ENCODE measurements at regions of chr11 and their contacts with region 1.

Region 1: GRCh38 chr11:76248210-76248609 is 41.9 kb upstream of the WNT11 start:
- DNase-seq: peak; percentile 52
- ATAC-seq: peak; percentile 55
- H3K4me3 Mint-ChIP-seq: no peak overlapping the region
- H3K27ac Mint-ChIP-seq: no peak overlapping the region
- H3K4me1 Mint-ChIP-seq: peaks cover 14% of the 10 kb centered on the region
- H3K27me3 Mint-ChIP-seq: peaks cover 18% of the 10 kb centered on the region
- CTCF ChIP-seq: peak; percentile 25; the same call in 1 of the 2 replicates

Region 2: DNA sequence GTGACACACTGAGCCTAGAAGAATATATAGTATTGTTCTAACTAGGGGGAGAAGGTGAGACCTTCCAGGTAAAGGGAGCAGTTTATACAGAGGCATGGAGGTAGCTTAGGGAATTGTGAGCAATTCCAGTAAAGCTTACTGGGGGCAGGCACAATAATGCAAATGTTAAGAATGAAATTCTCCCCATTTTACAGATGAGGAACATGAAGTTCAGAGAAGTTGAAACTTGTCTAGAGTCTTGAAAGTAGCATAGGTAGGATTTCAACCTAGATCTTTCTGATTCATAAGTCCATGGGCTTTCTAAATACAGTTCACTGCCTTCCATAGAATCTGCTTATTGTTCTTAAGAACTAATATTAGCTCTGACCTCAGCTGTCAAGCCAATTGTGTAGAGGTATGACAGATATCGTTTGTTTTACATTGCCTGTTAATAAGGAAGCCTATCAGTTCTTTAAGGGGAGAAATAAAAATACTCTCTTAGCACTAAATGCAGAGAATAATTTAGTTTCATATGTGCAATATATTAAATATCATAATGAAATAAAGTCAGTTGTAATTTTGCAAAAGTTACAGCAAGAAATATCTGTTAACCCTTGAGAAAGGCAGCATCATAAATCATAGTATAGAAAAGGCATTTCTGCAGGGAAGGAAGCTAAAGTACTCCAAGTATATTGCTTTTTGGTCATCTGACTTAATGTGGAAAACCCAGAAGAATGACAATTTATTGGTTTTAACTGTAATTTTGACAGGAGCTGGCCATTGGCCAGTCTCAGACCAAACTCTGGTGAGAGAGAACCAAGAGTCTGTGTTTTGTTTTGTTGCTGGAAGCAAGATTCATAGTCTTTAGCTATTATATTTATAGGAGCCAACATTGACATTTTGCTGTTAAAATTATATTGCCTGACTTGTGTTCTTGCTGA is 251.4 kb before region 1 on chr11:
- CTCF ChIA-PET with region 1: no interaction called
- POLR2A ChIA-PET with region 1: no interaction called
- DNase-seq: no peak
- ATAC-seq: no peak
- H3K4me3 Mint-ChIP-seq: no peak overlapping the region
- H3K27ac Mint-ChIP-seq: no peak overlapping the region
- H3K4me1 Mint-ChIP-seq: no peaks in the 10 kb centered on the region
- H3K27me3 Mint-ChIP-seq: no peaks in the 10 kb centered on the region
- CTCF ChIP-seq: no peak

Region 3: GRCh38 chr11:76083563-76084451 is 164.4 kb before region 1 on chr11:
- CTCF ChIA-PET with region 1: no interaction called
- POLR2A ChIA-PET with region 1: no interaction called
- DNase-seq: no peak
- ATAC-seq: no peak
- H3K4me3 Mint-ChIP-seq: no peak overlapping the region
- H3K27ac Mint-ChIP-seq: no peak overlapping the region
- H3K4me1 Mint-ChIP-seq: peaks cover 23% of the 10 kb centered on the region
- H3K27me3 Mint-ChIP-seq: no peaks in the 10 kb centered on the region
- CTCF ChIP-seq: no peak

Region 4: DNA sequence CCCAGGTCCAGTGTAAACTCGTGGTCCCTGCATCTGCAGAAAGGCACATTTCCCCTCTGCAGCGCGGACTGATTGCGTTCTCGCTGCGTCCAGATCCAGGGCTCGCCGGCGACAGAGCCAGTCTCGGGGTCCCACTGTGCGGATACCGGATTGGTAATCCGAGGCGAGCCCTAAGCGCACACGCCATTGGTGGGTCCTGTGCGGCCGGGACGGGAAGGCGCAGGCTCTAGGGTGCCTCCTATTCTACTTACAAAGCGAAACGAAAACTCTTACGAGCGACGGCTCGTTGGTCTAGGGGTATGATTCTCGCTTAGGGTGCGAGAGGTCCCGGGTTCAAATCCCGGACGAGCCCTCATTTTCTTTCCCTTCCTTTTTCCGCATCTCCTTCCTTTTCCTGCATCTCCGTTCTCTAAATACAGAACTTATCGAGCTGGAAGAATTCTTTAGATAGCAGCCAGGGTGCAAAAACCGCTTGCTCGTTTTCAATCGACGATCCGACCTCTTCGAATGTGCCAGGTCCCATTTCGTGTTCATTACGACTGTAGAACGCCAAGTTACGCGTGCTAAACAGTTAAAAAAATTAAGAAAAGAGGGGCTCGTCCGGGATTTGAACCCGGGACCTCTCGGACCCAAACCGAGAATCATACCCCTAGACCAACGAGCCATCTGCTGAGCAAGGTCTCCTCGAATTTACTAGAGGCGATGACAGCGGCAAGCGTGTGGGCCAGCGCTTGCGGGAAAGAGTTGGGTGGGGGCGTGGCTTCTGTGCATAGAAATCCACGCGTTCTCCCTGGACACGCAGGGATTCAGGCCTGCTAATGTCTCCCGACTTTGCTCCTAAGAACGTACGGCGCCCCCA is 12.7 kb before region 1 on chr11:
- CTCF ChIA-PET with region 1: interaction called, 11 read pairs
- POLR2A ChIA-PET with region 1: no interaction called
- DNase-seq: peak; percentile 94
- ATAC-seq: peak; percentile 79
- H3K4me3 Mint-ChIP-seq: peak overlapping the region; percentile 99
- H3K27ac Mint-ChIP-seq: peak overlapping the region; percentile 94
- H3K4me1 Mint-ChIP-seq: peaks cover 14% of the 10 kb centered on the region
- H3K27me3 Mint-ChIP-seq: peaks cover 6% of the 10 kb centered on the region
- CTCF ChIP-seq: no peak

Measured in WTC11 (cell line).